Ascending aorta (tissue), 2 donors: ENCODE measurements at regions of chr11 and their contacts with region 1.

Region 1: DNA sequence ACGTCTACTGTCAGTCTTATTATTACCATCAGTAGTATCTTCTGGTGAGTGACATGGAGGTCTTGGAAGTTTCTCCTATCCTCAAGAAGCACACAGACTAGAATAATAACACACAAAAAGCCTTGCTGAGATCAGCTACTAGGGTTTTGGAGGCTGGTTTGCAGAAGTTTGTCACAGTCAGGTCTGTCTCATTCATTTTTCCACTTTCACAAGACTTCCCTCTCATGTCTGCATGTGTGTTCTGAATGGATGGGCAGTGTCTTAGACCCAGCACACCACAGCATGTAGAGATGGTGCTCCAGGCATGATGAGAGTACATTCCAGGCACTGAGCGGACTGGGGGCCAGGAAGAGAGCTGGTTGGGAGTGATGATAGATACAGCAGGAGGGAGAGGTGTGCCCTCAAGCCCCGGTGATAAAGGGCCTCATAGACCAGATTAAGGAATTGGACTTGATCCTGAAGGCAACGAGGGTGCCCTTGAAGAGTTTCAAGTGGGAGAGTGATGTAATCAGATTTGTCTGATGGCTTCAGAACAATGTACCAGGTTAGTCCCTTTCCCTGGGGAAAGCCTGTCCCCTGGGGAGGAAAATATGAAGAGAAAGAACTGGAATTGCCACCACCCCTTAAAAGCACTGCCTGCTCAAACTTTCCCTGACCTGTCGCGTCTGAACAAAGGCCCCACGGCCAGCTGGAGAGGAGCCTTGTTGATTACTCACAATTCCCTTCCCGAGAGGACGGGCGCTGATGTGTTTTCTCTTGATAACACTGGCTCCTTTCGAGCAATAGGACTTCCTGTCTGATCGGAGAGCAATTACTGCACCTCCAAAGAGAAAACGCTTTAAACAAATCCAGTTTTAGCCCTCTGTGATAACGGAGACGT is 45.1 kb upstream of the LMO2 start:
- DNase-seq: peak; percentile 57 to 92
- H3K4me3 ChIP-seq: peak overlapping the region in 1 of 2 donors; percentile 9
- H3K27ac ChIP-seq: peak overlapping the region; percentile 76 to 79
- H3K4me1 ChIP-seq: peaks cover 9 to 39% of the 10 kb centered on the region in 2 donors
- H3K27me3 ChIP-seq: no peaks in the 10 kb centered on the region
- CTCF ChIP-seq: no peak

Region 2: DNA sequence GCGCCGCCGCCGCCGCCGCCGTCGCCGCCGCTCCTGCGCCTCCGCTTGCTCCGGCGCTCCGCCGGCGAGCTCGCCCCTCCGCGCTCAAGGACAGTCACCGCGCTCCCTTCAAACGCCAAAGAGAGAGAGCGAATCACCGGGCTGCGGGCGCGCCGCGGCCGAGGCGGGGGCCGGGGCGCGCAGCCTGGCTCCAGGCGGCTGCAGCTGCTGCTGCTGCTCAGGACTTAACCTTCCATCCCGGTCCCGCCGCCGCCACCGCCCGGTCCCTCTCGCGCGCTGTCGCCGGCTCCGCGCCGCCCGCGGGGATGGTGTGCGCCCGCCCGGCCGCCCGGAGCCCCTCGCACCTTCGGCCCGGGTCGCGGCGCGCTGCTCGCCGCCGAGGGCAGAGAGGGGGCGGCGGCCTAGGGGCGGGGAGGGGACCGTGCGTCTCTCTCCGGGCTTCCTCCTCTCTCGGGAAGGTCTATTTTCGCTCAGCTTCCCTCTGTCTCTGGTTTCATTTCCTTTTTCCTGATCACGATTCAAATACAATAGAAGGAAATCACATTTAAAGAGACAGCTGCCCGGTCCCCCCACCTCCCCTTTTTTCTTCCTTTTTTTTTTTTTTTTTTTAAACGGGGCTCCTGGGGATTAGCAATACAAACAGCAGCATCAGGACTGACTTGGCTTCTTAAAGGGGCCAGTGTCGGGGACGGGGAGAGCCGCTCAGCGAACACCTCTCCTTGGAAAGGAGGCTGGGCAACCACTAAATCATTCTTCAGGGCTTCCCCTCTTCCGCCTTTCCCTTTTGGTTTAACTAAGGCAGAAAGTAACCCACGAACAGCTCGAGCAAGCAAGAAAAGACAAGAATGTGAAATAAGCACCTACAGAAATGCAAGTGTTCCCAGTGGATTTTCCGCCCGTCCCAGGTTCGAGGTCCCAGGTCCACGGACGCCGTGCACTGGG is 67.2 kb before region 1 on chr11:
- intact Hi-C with region 1: loop called (anchors 2 kb)
- DNase-seq: no peak
- H3K4me3 ChIP-seq: peak overlapping the region; percentile 75 to 92
- H3K27ac ChIP-seq: peak overlapping the region; percentile 60 to 77
- H3K4me1 ChIP-seq: peaks cover 0 to 10% of the 10 kb centered on the region in 2 donors
- H3K27me3 ChIP-seq: no peaks in the 10 kb centered on the region
- CTCF ChIP-seq: no peak

Region 3: GRCh38 chr11:33885338-33886005 is 51.5 kb before region 1 on chr11:
- intact Hi-C with region 1: no loop called
- DNase-seq: no peak
- H3K4me3 ChIP-seq: no peak overlapping the region
- H3K27ac ChIP-seq: no peak overlapping the region
- H3K4me1 ChIP-seq: no peaks in the 10 kb centered on the region
- H3K27me3 ChIP-seq: no peaks in the 10 kb centered on the region
- CTCF ChIP-seq: no peak

Region 4: DNA sequence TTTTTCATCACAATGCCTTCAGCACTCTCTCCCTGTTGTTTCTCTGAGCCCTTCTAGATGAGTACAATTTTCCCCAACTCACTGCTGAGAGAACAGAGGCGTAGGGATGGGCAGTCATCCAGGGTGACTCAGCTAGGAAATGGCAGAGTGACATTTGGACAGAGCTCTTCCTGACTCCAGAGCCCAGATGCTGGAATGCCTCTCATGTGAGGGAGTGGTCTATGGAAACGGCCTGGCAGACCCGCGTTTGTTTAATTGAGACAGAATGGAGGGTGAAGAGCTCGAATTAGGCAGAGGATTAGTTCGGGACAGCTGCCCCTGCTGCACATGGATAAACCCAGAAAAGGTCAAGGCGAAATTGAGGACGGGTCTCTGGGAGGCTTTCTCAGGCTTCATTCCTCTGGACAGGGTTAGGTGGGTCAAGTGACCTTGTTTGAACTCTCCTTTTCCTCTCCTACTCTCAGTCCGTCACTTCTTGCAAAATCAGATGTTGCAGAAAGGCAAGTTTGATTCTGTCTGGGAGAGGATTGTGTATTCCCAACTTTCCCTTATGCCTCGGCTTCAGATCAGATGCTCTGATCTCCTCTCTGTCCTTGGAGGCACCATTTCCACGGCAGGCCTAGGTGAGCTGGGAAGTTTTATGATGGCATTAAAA is 37.5 kb before region 1 on chr11:
- intact Hi-C with region 1: loop called (anchors 2 kb)
- DNase-seq: peak; percentile 50 to 91
- H3K4me3 ChIP-seq: no peak overlapping the region
- H3K27ac ChIP-seq: peak overlapping the region in 1 of 2 donors; percentile 49
- H3K4me1 ChIP-seq: peaks cover 4 to 13% of the 10 kb centered on the region in 2 donors
- H3K27me3 ChIP-seq: no peaks in the 10 kb centered on the region
- CTCF ChIP-seq: no peak

Region 5: DNA sequence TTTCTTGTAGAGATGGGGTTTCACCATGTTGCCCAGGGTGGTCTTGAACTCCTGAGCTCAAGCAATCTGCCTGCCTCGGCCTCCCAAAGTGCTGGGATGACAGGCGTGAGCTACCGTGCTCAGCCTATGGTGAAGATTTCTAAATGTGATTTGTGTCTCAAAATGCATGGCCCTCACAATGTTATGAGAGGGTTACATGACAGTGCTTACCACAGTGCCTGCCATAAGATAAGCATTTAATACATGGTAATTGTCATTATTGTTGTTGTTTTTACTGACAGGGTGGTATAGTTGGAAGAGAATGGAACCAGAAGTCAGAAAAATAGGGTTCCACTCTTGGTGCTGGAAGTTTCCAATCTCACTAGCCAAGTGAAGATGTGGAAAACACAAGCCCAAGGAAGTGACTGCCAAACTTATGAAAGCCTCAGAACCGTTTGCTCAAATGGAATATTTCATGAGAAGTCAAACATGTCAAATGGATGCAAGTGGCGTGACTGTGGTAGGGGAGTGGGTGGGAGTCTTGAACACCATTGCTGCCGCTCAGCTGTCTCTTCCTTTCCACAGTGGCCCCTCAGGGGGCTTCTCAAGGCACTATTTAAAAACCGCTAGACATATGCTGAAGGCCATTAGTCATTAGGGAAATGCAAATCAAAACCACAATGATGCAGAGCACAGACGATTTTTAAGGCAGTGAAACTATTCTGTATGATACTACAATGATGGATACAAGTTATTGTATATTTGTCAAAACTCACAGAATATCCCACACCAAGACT is 15.9 kb before region 1 on chr11:
- intact Hi-C with region 1: no loop called
- DNase-seq: no peak
- H3K4me3 ChIP-seq: no peak overlapping the region
- H3K27ac ChIP-seq: no peak overlapping the region
- H3K4me1 ChIP-seq: no peaks in the 10 kb centered on the region
- H3K27me3 ChIP-seq: no peaks in the 10 kb centered on the region
- CTCF ChIP-seq: no peak

Region 6: DNA sequence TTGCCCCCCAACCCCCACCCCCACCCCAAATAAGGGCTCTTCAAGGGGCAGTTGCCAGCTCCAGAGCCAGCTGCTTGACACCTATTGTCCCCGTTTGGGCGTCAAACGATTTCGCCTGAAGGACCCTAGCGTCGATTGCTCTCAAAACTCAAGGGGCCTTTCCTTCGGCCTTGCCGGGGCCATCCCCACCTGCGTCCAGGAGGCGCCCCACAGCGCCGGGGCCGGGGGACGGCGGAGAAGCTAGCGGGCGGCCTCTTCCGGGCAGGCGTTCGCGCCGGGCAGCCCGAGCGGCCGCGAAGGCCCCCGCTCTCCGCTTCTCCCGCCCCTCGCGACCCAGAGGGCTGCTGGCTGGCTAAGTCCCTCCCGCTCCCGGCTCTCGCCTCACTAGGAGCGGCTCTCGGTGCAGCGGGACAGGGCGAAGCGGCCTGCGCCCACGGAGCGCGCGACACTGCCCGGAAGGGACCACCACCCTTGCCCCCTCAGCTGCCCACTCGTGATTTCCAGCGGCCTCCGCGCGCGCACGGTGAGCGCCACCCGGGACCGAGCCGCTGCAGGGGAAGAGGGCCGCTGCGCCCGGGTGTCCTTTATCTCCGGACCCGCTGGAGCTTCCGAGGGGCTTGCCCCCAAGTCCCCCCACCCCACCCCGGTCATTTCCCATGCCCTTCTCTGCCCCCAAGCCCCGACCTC is 114.5 kb after region 1 on chr11 and contains the start of gene CAPRIN1:
- intact Hi-C with region 1: no loop called
- DNase-seq: peak; percentile 23 to 91
- H3K4me3 ChIP-seq: peak within 1 kb of the TSS; percentile 92 to 99
- H3K27ac ChIP-seq: peak within 1 kb of the TSS; percentile 98 to 100
- H3K4me1 ChIP-seq: peaks cover 6 to 26% of the 10 kb centered on the region in 2 donors
- H3K27me3 ChIP-seq: no peaks in the 10 kb centered on the region
- CTCF ChIP-seq: peak in 1 of 3 experiments; percentile 8
- total RNA-seq, gene CAPRIN1: 155 TPM